Tibial artery (tissue), 4 donors: ENCODE measurements at regions of chr9 and their contacts with region 1.

Region 1: GRCh38 chr9:112333639-112334431 is 416 bp upstream of the PTBP3 start:
- DNase-seq: peak; percentile 92 to 97
- H3K4me3 ChIP-seq: peak overlapping the region; percentile 93 to 99
- H3K27ac ChIP-seq: peak overlapping the region; percentile 97 to 100
- H3K4me1 ChIP-seq: peaks cover 0 to 32% (median 7%) of the 10 kb centered on the region in 4 donors
- H3K27me3 ChIP-seq: no peaks in the 10 kb centered on the region
- CTCF ChIP-seq: peak; percentile 46 to 67

Region 2: GRCh38 chr9:112174218-112174964 is 159.4 kb before region 1 on chr9:
- intact Hi-C with region 1: loop called (anchors 10 kb)
- DNase-seq: peak in 1 of 2 donors; percentile 73
- H3K4me3 ChIP-seq: peak overlapping the region; percentile 62 to 81
- H3K27ac ChIP-seq: peak overlapping the region; percentile 19 to 72
- H3K4me1 ChIP-seq: peaks cover 0 to 16% (median 6%) of the 10 kb centered on the region in 4 donors
- H3K27me3 ChIP-seq: no peaks in the 10 kb centered on the region
- CTCF ChIP-seq: no peak

Region 3: GRCh38 chr9:112520656-112521055 is 186.8 kb after region 1 on chr9:
- intact Hi-C with region 1: no loop called
- DNase-seq: no peak
- H3K4me3 ChIP-seq: no peak overlapping the region
- H3K27ac ChIP-seq: no peak overlapping the region
- H3K4me1 ChIP-seq: no peaks in the 10 kb centered on the region
- H3K27me3 ChIP-seq: no peaks in the 10 kb centered on the region
- CTCF ChIP-seq: no peak